ENCODE measurements at regions of chr20 and their contacts with region 1.

Region 1: DNA sequence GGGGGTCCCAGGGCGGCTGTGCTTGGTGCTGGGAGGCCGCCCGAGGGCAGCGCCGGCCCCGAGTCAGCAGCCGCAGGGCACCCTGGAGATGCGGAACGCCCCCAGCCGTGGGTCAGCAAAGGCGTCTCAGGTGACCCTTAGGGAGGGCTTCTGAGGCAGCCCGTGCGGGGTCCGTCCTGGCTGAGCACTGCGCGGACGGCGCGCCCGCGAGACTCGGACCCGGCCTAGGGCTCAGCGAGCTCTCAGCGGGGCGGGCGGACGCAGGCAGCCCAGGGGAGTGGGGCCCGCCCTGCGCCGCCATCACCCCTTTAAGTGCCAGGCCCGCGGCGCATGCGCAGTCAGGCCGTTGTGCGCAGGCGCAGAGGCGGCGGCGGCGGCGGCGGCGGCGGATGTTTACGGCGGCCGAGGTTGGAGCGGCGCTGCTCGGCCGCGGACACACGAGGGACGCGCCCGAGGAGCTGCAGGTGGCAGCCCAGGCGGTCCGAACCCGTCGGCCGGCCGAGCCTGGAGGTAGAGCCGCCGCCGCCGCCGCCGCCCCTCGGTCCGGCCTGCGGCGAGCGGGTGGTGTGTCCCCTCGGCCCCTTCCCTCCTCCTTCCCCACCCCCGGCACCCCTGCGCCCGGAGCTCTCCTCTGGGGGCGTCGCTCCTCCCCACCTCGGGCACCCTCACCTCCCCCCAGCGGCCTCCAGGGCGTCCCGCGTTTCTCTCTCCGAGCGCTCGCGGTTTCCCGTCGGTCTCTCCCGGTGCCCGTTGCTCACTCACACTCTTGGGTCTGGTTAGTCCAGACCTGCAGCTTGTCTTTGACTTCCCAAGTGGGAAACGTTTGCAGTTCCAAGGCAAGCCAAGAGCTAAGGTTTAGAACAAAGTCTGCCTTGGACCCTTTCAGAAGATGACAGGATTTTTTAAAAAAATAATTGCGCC is at the start of gene PCMTD2:
- DNase-seq: peak; percentile 17
- ATAC-seq: peak; percentile 94
- H3K4me3 ChIP-seq: peak within 1 kb of the TSS; percentile 78
- H3K27ac ChIP-seq: peak within 1 kb of the TSS; percentile 77
- H3K4me1 ChIP-seq: peaks cover 19% of the 10 kb centered on the region
- H3K27me3 ChIP-seq: no peaks in the 10 kb centered on the region
- CTCF ChIP-seq: peak in 1 of 3 experiments; percentile 16; a peak in 1 of 6 replicates
- EP300 ChIP-seq: no peak
- POLR2A ChIP-seq: peak; percentile 84
- RAD21 ChIP-seq: no peak
- polyA plus RNA-seq, gene PCMTD2: 6.8 to 12.6 TPM

Region 2: DNA sequence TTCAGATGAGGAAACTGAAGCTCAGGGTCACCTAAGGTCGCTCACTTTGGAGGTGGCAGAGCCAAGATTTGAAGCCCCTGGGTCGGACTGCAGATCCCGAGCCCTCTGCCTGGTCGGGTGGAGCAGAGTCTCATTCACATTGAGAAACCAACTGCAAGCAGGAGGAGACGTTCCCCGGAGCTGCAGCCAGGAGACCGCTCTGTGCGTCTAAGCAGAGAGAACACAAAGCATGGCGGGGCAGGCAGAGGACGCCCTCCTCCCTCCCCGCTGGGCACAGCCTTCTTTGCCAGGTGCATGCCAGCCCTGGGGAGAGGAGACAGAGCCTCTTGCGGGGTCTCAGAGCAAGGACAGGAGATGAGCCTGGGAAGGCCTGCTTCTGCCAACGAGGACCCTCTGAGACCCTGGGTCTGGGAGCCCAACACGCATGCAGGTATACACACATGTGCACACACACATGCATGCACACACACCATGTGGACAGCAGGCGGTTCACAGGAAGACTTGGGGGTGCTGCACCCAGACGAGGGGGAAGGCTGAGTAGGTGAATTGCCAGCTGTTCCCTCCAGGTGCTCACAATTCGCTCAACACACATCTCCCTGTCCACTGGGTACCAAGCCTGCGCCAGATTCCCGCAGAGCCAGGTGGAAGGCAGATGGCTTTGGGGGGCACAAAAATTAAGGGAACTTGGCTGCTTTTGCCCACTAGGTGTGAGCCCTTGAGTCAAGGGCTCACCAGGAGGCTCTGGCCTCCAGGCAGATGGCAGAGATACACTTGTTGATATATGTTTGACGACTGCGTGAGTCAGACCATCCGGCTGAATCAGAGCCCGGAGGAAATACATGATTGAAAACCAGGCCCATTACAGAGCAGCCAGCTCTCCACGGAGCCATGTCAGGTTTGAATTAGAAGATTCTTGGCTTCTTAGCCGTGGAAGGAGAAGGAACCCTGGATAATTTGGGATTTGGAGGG is 1552.5 kb before region 1 on chr20:
- CTCF ChIA-PET with region 1: no interaction called
- POLR2A ChIA-PET with region 1: no interaction called
- RAD21 ChIA-PET with region 1: no interaction called
- SMC1A ChIA-PET with region 1: no interaction called
- in situ Hi-C with region 1: no loop called
- intact Hi-C with region 1: no loop called
- DNase-seq: no peak
- ATAC-seq: no peak
- H3K4me3 ChIP-seq: no peak overlapping the region
- H3K27ac ChIP-seq: no peak overlapping the region
- H3K4me1 ChIP-seq: no peaks in the 10 kb centered on the region
- H3K27me3 ChIP-seq: peaks cover 0 to 6% of the 10 kb centered on the region in 2 experiments; a peak in 3 of 4 replicates
- CTCF ChIP-seq: no peak
- EP300 ChIP-seq: no peak
- POLR2A ChIP-seq: no peak
- RAD21 ChIP-seq: no peak

Region 3: GRCh38 chr20:64168381-64169090 is 87.1 kb before region 1 on chr20:
- CTCF ChIA-PET with region 1: no interaction called
- POLR2A ChIA-PET with region 1: no interaction called
- RAD21 ChIA-PET with region 1: no interaction called
- SMC1A ChIA-PET with region 1: no interaction called
- in situ Hi-C with region 1: no loop called
- intact Hi-C with region 1: no loop called
- DNase-seq: no peak
- ATAC-seq: no peak
- H3K4me3 ChIP-seq: no peak overlapping the region
- H3K27ac ChIP-seq: no peak overlapping the region
- H3K4me1 ChIP-seq: no peaks in the 10 kb centered on the region
- H3K27me3 ChIP-seq: peaks cover 0 to under 1% of the 10 kb centered on the region in 2 experiments; a peak in 3 of 4 replicates
- CTCF ChIP-seq: no peak
- EP300 ChIP-seq: no peak
- POLR2A ChIP-seq: no peak
- RAD21 ChIP-seq: no peak

Region 4: DNA sequence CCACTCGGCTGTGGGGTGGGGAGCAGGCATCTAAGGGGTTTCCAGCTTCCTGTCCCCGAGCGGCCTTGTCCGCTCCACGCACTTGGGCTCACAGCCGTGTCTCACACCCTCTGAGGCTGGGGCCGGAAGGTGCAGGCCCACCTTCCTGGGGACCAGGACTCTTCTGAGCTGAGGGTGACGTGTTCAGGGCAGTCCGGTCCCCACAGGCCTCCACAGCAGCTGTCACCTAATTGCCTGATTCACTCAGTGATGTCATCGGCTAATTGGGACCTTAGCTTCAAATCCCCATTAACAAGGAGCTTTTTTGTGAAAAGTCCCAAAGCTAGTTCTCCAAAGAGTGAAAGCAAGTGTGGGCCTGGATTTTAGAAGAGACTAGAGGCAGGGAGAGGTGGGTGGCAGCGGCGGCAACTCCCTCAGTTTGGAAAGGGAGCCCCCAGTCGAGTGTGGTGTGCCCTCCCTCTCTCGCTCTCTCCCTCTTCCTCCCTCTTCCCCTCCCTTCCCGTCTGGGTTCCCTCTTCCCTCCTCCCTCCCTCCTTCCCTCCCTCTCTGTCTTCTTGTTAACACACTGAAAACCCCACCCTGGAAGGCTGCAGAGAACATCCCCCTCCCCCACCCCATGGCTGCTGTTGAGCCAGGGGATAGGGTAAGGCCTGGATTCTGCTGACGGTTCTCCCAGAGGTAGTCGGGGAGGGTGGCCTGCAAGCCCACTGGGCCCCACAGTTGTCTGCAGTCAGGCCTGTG is 52.4 kb before region 1 on chr20:
- CTCF ChIA-PET with region 1: no interaction called
- POLR2A ChIA-PET with region 1: no interaction called
- RAD21 ChIA-PET with region 1: no interaction called
- SMC1A ChIA-PET with region 1: no interaction called
- in situ Hi-C with region 1: no loop called
- intact Hi-C with region 1: no loop called
- DNase-seq: no peak
- ATAC-seq: no peak
- H3K4me3 ChIP-seq: no peak overlapping the region
- H3K27ac ChIP-seq: no peak overlapping the region
- H3K4me1 ChIP-seq: no peaks in the 10 kb centered on the region
- H3K27me3 ChIP-seq: peaks cover 10 to 14% of the 10 kb centered on the region in 2 experiments
- CTCF ChIP-seq: no peak
- EP300 ChIP-seq: no peak
- POLR2A ChIP-seq: no peak
- RAD21 ChIP-seq: no peak

Region 5: GRCh38 chr20:64223526-64224067 is 32.0 kb before region 1 on chr20:
- CTCF ChIA-PET with region 1: interaction called, 13 read pairs
- POLR2A ChIA-PET with region 1: no interaction called
- RAD21 ChIA-PET with region 1: interaction called, 7 read pairs
- SMC1A ChIA-PET with region 1: interaction called, 4 read pairs
- in situ Hi-C with region 1: no loop called
- intact Hi-C with region 1: no loop called
- DNase-seq: no peak
- ATAC-seq: peak; percentile 79
- H3K4me3 ChIP-seq: no peak overlapping the region
- H3K27ac ChIP-seq: no peak overlapping the region
- H3K4me1 ChIP-seq: no peaks in the 10 kb centered on the region
- H3K27me3 ChIP-seq: peaks cover 0 to 9% of the 10 kb centered on the region in 2 experiments; a peak in 2 of 4 replicates
- CTCF ChIP-seq: peak in 2 of 3 experiments; percentile 50 to 58; a peak in 3 of 6 replicates
- EP300 ChIP-seq: no peak
- POLR2A ChIP-seq: no peak
- RAD21 ChIP-seq: no peak

Region 6: GRCh38 chr20:64238851-64239387 is 16.7 kb before region 1 on chr20:
- CTCF ChIA-PET with region 1: interaction called, 18 read pairs
- POLR2A ChIA-PET with region 1: interaction called, 11 read pairs
- RAD21 ChIA-PET with region 1: interaction called, 6 read pairs
- SMC1A ChIA-PET with region 1: interaction called, 3 read pairs
- in situ Hi-C with region 1: no loop called
- intact Hi-C with region 1: no loop called
- DNase-seq: peak; percentile 36
- ATAC-seq: peak; percentile 96
- H3K4me3 ChIP-seq: no peak overlapping the region
- H3K27ac ChIP-seq: peak overlapping the region; percentile 40
- H3K4me1 ChIP-seq: peaks cover 12% of the 10 kb centered on the region
- H3K27me3 ChIP-seq: 0 out of 4 replicates have a peak, but pooled peaks cover 0 to 3% of the 10 kb centered on the region in 2 experiments
- CTCF ChIP-seq: 0 out of 6 replicates have a peak, but pooled peaks of 1 of the 3 experiments have one; percentile 1
- EP300 ChIP-seq: 0 out of 4 replicates have a peak, but pooled peaks of 1 of the 2 experiments have one; percentile 40
- POLR2A ChIP-seq: no peak
- RAD21 ChIP-seq: peak; percentile 24; the same call in 1 of the 2 replicates

Region 7: GRCh38 chr20:64244870-64245603 is 10.6 kb before region 1 on chr20:
- CTCF ChIA-PET with region 1: interaction called, 18 read pairs
- POLR2A ChIA-PET with region 1: interaction called, 11 read pairs
- RAD21 ChIA-PET with region 1: interaction called, 6 read pairs
- SMC1A ChIA-PET with region 1: interaction called, 3 read pairs
- in situ Hi-C with region 1: no loop called
- intact Hi-C with region 1: no loop called
- DNase-seq: no peak
- ATAC-seq: no peak
- H3K4me3 ChIP-seq: no peak overlapping the region
- H3K27ac ChIP-seq: no peak overlapping the region
- H3K4me1 ChIP-seq: no peaks in the 10 kb centered on the region
- H3K27me3 ChIP-seq: peaks cover 0 to 8% of the 10 kb centered on the region in 2 experiments; a peak in 1 of 4 replicates
- CTCF ChIP-seq: no peak
- EP300 ChIP-seq: no peak
- POLR2A ChIP-seq: no peak
- RAD21 ChIP-seq: no peak

Region 8: DNA sequence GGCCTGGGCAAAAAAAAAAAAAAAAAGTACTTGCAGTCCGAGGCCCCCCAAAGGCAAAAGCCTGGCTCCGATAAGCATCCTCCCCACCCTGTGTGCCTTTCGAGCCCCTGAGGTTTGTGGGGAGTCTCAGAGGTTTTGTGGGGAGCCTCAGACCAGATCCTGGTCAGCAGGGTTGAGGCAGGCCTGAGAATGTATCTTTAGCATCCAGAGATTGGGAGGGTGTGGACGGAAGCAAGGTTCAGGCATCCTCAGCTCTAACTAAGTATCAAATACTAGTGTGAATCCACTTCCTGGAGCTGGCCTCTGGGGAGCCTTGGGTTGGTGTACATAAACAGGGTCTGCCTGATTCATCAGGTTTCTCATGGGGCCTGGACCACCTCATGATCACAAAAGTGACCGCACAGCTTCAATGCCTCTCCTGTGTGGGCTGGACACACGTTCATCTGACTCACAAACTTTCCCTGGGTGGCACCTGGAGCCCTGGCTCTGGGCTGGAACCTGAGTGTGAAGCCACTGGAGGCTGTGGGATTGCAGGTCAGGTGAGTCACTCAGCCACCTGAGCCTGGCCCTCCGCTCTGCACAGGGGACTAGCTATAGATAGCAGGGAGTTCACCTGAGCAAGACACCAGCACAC is 24.3 kb after region 1 on chr20:
- CTCF ChIA-PET with region 1: interaction called, 99 read pairs
- POLR2A ChIA-PET with region 1: no interaction called
- RAD21 ChIA-PET with region 1: interaction called, 5 read pairs
- SMC1A ChIA-PET with region 1: interaction called, 3 read pairs
- in situ Hi-C with region 1: no loop called
- intact Hi-C with region 1: no loop called
- DNase-seq: no peak
- ATAC-seq: peak; percentile 36
- H3K4me3 ChIP-seq: no peak overlapping the region
- H3K27ac ChIP-seq: no peak overlapping the region
- H3K4me1 ChIP-seq: peaks cover 4% of the 10 kb centered on the region; the same call in 1 of the 2 replicates
- H3K27me3 ChIP-seq: no peaks in the 10 kb centered on the region; a peak in 1 of 4 replicates
- CTCF ChIP-seq: no peak
- EP300 ChIP-seq: no peak
- POLR2A ChIP-seq: no peak
- RAD21 ChIP-seq: no peak

Measured in GM12878 (cell line).